Head of caudate nucleus (tissue), 42 donors: ENCODE measurements at regions of chr21 and their contacts with region 1.

Region 1: DNA sequence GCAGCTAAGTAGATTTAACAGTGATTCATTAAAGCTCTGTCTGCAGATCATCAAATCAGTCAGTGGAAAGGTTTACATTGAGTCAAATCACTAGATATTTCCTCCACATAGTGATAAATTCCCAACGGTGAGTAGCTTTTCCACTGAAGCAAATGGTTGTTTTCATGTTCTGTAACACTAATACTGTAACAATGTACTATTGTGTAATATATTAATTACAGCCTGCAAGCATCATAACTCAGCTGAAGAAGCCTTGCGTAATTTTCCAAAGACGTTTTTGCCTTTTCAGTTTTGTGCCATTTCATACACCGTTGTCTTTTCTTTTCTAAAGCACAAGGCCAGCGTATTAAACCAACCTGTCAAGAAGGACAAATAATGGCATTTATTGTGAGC is 16.9 kb upstream of the PDE9A start:
- DNase-seq: no peak

Region 2: GRCh38 chr21:42695697-42696380 is 59.3 kb after region 1 on chr21:
- intact Hi-C with region 1: loop called (anchors 10 kb)
- DNase-seq: peak in 1 of 42 donors; percentile 57

Region 3: GRCh38 chr21:42724226-42724920 is 87.8 kb after region 1 on chr21:
- intact Hi-C with region 1: no loop called
- DNase-seq: peak in 1 of 42 donors; percentile 24